ENCODE measurements at regions of chr5 and their contacts with region 1.

Region 1: GRCh38 chr5:170420780-170421412 is 31.7 kb upstream of the KCNMB1 start:
- DNase-seq: peak in 1 of 3 donors; percentile 65
- ATAC-seq: peak; percentile 79 to 84 (median 82)
- H3K4me3 ChIP-seq: no peak overlapping the region
- H3K27ac ChIP-seq: no peak overlapping the region
- H3K4me1 ChIP-seq: no peaks in the 10 kb centered on the region
- H3K27me3 ChIP-seq: no peaks in the 10 kb centered on the region
- CTCF ChIP-seq: peak; percentile 62 to 82 (median 78)
- POLR2A ChIP-seq: no peak

Region 2: DNA sequence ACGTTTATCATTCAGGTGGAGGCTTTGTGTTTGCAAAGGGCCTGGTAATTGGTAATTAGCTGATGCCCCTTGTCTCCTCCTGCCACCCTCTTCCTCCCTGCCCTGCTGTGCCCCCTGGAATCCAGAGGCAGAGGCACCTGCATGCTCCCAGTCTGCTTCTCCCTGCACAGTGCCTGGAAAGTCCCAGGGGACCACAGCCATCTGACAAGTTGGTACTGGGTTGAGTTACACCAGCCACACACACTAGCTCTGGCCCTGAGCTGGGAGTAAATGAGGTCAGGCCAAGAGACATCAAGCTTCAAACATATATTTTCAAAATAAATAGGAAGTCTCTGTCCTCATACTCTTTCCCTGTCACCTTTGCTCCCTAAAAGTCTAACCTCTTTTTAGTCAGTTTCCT is 496.9 kb before region 1 on chr5:
- intact Hi-C with region 1: no loop called
- DNase-seq: no peak
- ATAC-seq: no peak
- H3K4me3 ChIP-seq: no peak overlapping the region
- H3K27ac ChIP-seq: no peak overlapping the region
- H3K4me1 ChIP-seq: no peaks in the 10 kb centered on the region
- H3K27me3 ChIP-seq: no peaks in the 10 kb centered on the region
- CTCF ChIP-seq: no peak
- POLR2A ChIP-seq: no peak

Region 3: DNA sequence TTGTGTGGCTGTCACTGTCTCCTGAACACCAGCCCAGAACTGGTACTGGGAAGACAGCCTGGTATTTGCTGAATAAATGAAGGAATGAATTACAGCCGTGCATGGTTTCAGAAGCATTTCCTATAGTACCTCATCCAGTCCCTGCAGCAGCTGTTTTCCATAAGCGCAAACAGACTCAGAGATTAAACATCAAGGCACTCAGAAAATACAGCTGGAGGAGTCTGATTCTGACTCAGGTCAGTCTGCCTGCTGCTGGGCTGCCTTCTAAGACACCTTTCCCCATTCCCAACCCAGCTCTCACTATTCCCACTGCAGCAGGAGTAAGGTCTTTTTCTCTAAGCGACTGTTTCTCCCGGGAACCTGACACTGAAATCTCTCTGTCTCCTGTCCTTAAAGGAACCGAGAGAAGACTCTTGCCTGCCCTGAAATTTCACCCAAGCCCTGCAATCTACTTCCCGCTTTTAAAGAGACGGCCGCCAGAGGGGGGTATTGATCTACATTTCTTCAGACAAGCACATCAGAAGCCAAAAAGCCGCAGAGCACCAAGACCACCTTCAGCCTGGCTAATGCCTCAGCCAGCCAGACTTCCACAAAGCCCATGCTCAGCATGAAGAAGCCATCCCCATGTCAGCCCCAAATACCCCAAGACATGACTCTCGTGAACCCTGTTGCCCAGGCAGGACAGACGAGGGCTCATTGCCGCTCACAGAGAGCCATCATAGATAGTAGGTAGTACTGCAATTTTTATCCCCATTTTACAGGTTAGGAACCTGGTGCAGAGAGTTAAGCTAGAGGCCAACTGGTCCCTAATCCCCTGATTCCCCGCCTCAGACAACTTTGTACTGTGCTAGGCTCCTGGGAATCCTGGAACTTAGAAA is 320.6 kb before region 1 on chr5:
- intact Hi-C with region 1: loop called in 1 of 2 experiments (anchors 10 kb)
- DNase-seq: peak; percentile 62 to 73 (median 67)
- ATAC-seq: peak; percentile 53 to 77 (median 71)
- H3K4me3 ChIP-seq: no peak overlapping the region
- H3K27ac ChIP-seq: no peak overlapping the region
- H3K4me1 ChIP-seq: no peaks in the 10 kb centered on the region
- H3K27me3 ChIP-seq: no peaks in the 10 kb centered on the region
- CTCF ChIP-seq: peak; percentile 53 to 67 (median 61)
- POLR2A ChIP-seq: no peak

Region 4: GRCh38 chr5:170267431-170268152 is 153.3 kb before region 1 on chr5:
- intact Hi-C with region 1: loop called in 1 of 2 experiments (anchors 2 kb)
- DNase-seq: peak; percentile 69 to 74 (median 73)
- ATAC-seq: peak; percentile 72 to 74 (median 74)
- H3K4me3 ChIP-seq: no peak overlapping the region
- H3K27ac ChIP-seq: peak overlapping the region in 1 of 3 donors; percentile 4
- H3K4me1 ChIP-seq: peaks cover 0 to 4% (median 0%) of the 10 kb centered on the region in 4 donors
- H3K27me3 ChIP-seq: no peaks in the 10 kb centered on the region
- CTCF ChIP-seq: peak; percentile 65 to 85 (median 76)
- POLR2A ChIP-seq: no peak

Region 5: DNA sequence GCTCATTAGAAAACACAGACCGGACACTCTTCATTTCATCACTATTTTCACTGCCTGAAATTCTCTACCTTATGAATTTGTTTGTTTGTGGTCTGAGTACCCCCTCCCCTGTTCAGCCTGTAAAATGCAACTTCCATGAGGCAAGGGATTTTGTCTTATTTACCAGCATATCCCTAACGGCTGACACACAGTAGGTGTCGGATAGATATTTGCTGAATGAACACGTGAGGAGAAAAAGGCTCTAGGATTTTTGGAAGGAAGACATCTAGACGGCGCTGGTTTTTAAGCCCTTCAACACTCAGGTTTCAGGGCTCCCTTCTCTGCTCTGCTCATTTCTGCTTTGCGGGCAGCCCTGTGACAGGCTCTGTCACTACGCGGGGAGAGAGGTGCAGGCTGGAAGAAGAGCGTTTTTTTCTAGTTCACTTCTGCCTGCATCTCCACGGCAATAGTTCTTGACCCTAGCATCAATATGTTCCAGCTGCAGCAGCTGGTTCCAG is 72.7 kb before region 1 on chr5:
- intact Hi-C with region 1: no loop called
- DNase-seq: no peak
- ATAC-seq: no peak
- H3K4me3 ChIP-seq: no peak overlapping the region
- H3K27ac ChIP-seq: no peak overlapping the region
- H3K4me1 ChIP-seq: no peaks in the 10 kb centered on the region
- H3K27me3 ChIP-seq: peaks cover 0 to 4% of the 10 kb centered on the region in 2 donors
- CTCF ChIP-seq: peak in 2 of 4 donors; percentile 6 to 17
- POLR2A ChIP-seq: no peak

Region 6: GRCh38 chr5:170538696-170539586 is 118.0 kb after region 1 on chr5:
- intact Hi-C with region 1: no loop called
- DNase-seq: no peak
- ATAC-seq: peak in 1 of 4 donors; percentile 42
- H3K4me3 ChIP-seq: no peak overlapping the region
- H3K27ac ChIP-seq: no peak overlapping the region
- H3K4me1 ChIP-seq: no peaks in the 10 kb centered on the region
- H3K27me3 ChIP-seq: no peaks in the 10 kb centered on the region
- CTCF ChIP-seq: no peak
- POLR2A ChIP-seq: no peak

Region 7: DNA sequence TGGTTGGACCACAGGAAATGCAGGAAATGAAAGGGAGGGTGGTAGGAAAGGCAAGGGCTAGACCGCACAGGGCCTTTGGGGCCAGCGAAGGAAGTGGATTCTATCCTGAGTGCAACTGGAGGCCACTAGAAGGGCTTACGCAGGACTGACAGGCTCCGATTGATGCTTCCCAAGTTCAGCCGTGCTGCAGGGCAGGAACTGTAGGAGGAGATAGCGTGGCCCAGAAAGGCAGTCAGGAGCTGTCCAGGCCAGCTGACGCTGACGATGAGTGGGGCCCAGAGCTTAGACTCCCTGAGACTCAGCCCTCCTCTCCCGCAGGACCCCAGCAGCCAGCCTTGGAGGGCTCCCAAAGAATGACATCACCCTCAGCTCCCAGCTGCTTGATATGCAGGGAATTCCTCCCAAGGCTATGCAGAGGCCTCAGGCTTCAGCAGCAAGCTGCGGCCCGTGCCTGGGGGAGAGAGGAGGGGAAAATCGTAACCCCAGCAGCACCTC is 131.8 kb after region 1 on chr5:
- intact Hi-C with region 1: no loop called
- DNase-seq: peak; percentile 40 to 58 (median 49)
- ATAC-seq: peak; percentile 55 to 84 (median 66)
- H3K4me3 ChIP-seq: no peak overlapping the region
- H3K27ac ChIP-seq: no peak overlapping the region
- H3K4me1 ChIP-seq: no peaks in the 10 kb centered on the region
- H3K27me3 ChIP-seq: no peaks in the 10 kb centered on the region
- CTCF ChIP-seq: no peak
- POLR2A ChIP-seq: no peak